Endothelial cell of umbilical vein (primary cell): ENCODE measurements at regions of chr1 and their contacts with region 1.

Region 1: DNA sequence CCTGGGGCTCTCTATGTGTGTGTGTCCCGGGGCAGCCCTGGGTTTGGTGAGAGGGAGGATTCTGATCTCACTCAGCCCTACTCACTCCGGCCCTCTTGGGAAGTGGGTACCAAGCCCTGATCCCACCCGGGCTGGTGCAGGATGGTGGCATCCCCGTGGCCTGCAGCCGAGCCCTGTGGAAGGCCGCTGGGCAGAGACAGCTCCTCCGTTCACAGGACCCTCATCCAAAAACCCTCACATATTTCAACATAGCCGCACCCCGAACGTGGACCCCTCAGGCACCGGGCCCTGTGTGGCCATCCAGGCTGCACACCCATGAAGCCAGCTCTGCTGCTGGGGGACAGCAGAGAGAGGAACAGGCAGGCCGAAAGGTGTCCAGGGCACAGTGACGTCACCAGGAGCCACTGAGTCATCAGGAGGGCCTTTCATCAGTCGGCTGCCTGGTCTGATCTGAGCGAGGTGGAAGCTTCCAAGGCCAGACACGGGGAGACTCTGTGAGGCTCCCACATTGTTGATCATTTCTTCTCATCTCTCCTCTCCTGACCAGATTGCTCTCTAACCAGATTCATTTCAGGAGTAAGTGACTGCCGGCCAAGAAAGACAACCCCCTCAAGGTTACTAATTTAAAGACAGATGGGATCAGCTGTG is 16.2 kb upstream of the GPR157 start:
- DNase-seq: no peak
- H3K4me3 ChIP-seq: no peak overlapping the region
- H3K27ac ChIP-seq: no peak overlapping the region
- H3K4me1 ChIP-seq: peaks cover 9% of the 10 kb centered on the region
- H3K27me3 ChIP-seq: no peaks in the 10 kb centered on the region
- CTCF ChIP-seq: no peak
- POLR2A ChIP-seq: no peak

Region 2: DNA sequence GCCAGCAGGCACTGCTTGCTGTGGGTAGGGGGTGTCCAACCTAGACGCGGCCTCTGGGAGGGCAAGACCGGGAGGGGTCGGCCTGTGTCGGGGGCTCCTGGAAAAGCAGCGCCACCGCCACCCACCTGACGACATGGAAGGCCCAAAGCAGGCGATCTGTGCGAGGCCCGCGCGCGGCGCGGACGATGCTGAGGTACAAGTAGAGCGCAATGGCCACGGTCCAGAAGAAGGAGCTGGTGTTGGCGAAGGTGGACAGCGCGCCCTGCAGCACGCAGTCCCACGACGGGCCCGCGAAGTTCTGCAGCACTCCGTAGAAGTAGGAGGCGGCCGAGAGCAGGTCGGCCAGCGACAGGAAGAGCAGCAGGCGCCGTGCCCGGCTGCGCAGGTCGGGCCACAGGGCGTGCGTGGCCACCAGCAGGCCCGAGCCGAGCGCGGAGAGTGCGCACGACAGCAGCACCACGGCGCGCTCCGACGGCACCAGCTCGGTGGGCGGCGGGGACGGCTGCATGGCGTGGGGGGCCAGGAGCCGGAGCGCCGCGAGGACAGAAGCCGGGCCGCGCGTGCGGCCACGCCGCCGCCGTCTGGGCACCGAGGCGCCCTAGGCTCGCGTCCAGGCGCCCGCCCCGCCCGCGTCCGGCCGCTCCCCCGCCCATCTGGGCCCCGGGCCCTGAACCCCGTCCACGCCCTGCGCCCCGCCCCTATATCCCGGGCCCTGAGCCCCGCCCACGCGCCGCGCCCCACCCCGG is 16.5 kb before region 1 on chr1 and contains the start of gene GPR157:
- CTCF ChIA-PET with region 1: interaction called, 22 read pairs
- POLR2A ChIA-PET with region 1: no interaction called
- dilution Hi-C with region 1: no loop called
- intact Hi-C with region 1: no loop called
- DNase-seq: peak; percentile 70
- H3K4me3 ChIP-seq: peak within 1 kb of the TSS; percentile 34 to 49 (median 36)
- H3K27ac ChIP-seq: no peak within 1 kb of the TSS
- H3K4me1 ChIP-seq: peaks cover 8% of the 10 kb centered on the region
- H3K27me3 ChIP-seq: no peaks in the 10 kb centered on the region
- CTCF ChIP-seq: peak in 1 of 2 donors; percentile 19
- POLR2A ChIP-seq: peak; percentile 78
- total RNA-seq, gene GPR157: 5.2 and 6.5 TPM in 2 replicates

Region 3: DNA sequence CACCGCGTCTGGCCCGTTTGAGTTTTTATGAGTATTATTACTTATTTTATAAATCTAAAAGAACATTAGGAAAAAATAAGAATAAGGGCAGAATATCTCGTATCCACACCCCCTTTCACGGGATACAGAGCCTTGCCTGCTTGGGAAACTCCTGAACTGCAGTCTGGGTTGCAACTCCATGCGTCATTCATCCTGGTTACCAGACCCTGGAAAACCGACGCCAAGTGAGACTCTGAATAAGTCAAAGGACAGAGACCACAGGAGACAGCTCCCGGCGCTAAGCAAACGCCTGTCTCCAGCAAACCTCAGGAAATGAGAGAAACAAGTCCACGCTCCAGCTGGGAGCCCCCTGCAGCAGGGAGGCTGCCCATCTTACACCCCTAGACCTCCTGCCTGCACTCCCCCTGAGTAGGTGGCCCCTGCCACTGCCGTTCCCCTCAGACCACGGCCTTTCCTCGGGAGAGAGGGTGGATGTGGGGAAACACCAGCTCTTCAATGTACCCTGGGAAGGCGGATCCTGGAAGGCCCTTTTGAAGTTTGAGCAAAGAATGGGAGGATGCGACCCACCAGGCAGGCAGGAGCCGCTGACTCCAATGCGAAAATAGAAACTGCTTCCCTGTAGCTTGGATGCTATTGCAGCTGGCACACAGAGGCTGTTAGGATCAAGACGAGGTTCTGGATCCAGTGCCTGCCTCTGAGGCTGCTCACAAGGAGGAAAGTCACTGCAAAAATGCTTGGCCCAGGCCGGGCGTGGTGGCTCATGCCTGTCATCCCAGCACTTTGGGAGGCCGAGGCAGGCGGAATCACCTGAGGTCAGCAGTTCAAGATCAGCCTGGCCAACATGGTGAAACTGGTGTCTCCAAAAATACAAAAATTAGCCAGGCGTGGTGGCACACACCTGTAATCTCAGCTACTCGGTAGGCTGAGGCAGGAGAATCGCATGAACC is 21.4 kb after region 1 on chr1:
- CTCF ChIA-PET with region 1: interaction called, 10 read pairs
- POLR2A ChIA-PET with region 1: no interaction called
- dilution Hi-C with region 1: no loop called
- intact Hi-C with region 1: loop called (anchors 2 kb)
- DNase-seq: peak; percentile 69
- H3K4me3 ChIP-seq: no peak overlapping the region
- H3K27ac ChIP-seq: peak overlapping the region; percentile 99
- H3K4me1 ChIP-seq: peaks cover 39% of the 10 kb centered on the region
- H3K27me3 ChIP-seq: no peaks in the 10 kb centered on the region
- CTCF ChIP-seq: no peak
- POLR2A ChIP-seq: no peak

Region 4: DNA sequence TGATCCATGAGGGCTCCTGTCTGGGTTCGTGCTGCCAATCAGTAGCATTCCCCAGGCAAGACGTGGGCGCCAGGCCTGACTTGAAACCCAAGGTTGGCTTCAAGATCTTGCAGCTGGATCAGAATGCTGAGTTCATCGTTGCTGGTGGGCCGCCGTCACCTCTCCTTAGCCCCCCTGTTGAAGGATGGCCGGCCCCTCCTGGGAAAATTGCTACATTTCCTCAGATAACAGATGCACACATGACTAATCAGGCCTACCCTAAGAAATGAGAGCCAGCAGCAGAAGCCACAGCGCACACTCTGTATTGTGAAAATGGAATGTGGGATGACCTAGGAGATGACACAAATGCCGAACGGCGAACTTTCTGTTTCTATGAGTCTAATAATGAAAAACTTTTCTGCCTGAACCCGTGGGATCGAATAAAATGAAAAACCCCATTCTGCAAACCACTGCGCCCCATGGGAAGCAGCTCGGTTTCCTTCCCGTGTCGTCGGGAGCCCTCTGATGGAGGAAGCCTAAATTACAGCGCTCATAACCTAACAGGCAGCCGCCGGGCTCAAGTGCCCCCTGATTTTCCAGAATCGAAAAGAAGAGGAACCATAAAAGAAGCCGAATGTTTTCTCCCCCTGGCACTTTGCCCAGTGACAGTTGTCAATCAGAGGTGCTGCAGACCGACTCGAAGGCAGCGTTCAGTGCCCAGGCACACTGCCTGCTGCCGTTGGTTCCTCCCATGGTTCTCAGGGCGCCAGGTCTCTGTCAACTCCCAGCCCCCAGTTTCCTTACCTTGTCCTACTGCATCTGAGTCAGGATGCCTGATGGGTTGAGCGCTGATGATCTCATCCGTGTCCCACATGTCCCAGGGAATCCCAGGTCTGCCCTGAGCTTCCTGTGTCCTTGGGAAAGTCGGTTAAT is 51.2 kb after region 1 on chr1:
- CTCF ChIA-PET with region 1: interaction called, 29 read pairs
- POLR2A ChIA-PET with region 1: no interaction called
- dilution Hi-C with region 1: no loop called
- intact Hi-C with region 1: loop called (anchors 1 kb)
- DNase-seq: peak; percentile 66
- H3K4me3 ChIP-seq: no peak overlapping the region
- H3K27ac ChIP-seq: no peak overlapping the region
- H3K4me1 ChIP-seq: peaks cover 14% of the 10 kb centered on the region
- H3K27me3 ChIP-seq: peaks cover 2 to 5% of the 10 kb centered on the region in 2 experiments
- CTCF ChIP-seq: peak; percentile 74 to 75
- POLR2A ChIP-seq: no peak

Region 5: GRCh38 chr1:9249534-9250410 is 104.6 kb after region 1 on chr1:
- CTCF ChIA-PET with region 1: interaction called, 17 read pairs
- POLR2A ChIA-PET with region 1: no interaction called
- dilution Hi-C with region 1: no loop called
- intact Hi-C with region 1: no loop called
- DNase-seq: peak; percentile 41
- H3K4me3 ChIP-seq: no peak overlapping the region
- H3K27ac ChIP-seq: no peak overlapping the region
- H3K4me1 ChIP-seq: no peaks in the 10 kb centered on the region
- H3K27me3 ChIP-seq: no peaks in the 10 kb centered on the region
- CTCF ChIP-seq: peak; percentile 61 to 77
- POLR2A ChIP-seq: no peak